ENCODE measurements at regions of chr6 and their contacts with region 1.

Region 1: DNA sequence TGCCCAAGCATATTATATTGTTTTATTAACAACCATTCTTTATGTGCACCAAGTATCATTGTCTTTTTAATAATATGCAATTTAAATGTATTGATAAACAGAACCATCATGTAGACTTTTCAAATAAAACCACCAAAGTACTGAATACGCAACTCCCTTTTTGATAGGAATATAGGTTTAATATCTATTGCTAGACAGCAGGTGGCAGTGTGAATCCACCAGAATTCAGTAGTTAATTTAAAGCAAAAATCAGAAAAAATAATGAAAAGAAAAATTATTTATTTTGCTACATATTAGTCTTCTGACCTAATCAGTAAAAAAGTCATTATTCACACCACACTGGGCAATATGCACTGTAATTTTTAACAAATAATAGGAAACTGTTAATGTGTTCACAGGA is 143.7 kb downstream of the KLHL32 start:
- DNase-seq: no peak
- ATAC-seq: no peak

Region 2: GRCh38 chr6:96626759-96627364 is 441.3 kb before region 1 on chr6:
- intact Hi-C with region 1: loop called (anchors 10 kb)
- DNase-seq: no peak
- ATAC-seq: peak; percentile 65

Region 3: GRCh38 chr6:97312245-97312644 is 244.0 kb after region 1 on chr6:
- intact Hi-C with region 1: no loop called
- DNase-seq: no peak
- ATAC-seq: no peak